Dendritic cell treated with granulocyte-macrophage colony-stimulating factor and Interleukin-4, amounts not matched to agents 40 ng/mL and 50 ng/mL, for 4 days (primary cell): ENCODE measurements at regions of chr6 and their contacts with region 1.

Region 1: GRCh38 chr6:30102970-30103874 is 9.7 kb downstream of the TRIM31 start:
- H3K4me3 Mint-ChIP-seq: peak overlapping the region; percentile 77
- H3K27ac Mint-ChIP-seq: peak overlapping the region; percentile 59
- H3K4me1 Mint-ChIP-seq: peaks cover 48% of the 10 kb centered on the region
- H3K27me3 Mint-ChIP-seq: peaks cover 68% of the 10 kb centered on the region

Region 2: GRCh38 chr6:29995340-29995777 is 107.9 kb before region 1 on chr6:
- intact Hi-C with region 1: no loop called
- H3K4me3 Mint-ChIP-seq: no peak overlapping the region
- H3K27ac Mint-ChIP-seq: no peak overlapping the region
- H3K4me1 Mint-ChIP-seq: no peaks in the 10 kb centered on the region
- H3K27me3 Mint-ChIP-seq: peaks cover 31% of the 10 kb centered on the region

Region 3: DNA sequence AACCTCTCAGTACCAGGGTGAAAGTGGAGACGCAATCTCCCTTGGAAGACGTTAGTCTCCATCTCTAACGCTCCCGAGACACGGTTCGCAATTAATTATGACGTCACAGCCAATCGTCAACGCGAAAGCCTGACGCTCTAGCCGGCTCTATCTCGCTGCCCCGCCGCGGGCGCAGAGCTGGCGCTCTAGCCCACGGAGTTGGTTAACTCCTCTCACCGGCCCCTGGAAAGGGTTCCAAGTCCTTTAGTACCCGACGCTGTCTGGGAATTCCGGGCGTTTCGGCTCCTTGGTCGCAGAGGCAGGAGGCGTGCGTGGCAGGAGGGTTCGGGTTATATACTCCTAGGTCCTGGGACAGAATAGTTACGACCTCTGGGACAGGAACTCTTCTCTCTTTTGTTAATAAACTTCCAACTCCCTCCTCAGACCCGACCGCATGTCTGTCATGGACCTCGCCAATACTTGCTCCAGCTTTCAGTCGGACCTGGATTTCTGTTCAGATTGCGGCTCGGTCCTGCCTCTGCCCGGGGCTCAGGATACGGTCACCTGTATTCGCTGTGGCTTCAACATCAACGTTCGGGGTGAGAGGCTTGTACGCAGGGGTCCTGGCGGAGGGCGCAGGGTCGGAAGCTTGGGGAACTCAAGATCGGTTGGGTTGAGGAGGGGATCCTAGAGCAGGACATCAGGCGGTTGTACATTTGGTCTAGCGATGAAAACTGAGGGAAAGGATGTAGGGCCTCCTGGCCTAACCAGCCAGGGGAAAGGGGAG is 41.9 kb before region 1 on chr6 and contains the start of gene POLR1H:
- intact Hi-C with region 1: loop called (anchors 2 kb)
- H3K4me3 Mint-ChIP-seq: peak within 1 kb of the TSS; percentile 97
- H3K27ac Mint-ChIP-seq: peak within 1 kb of the TSS; percentile 97
- H3K4me1 Mint-ChIP-seq: peaks cover 32% of the 10 kb centered on the region
- H3K27me3 Mint-ChIP-seq: no peaks in the 10 kb centered on the region

Region 4: GRCh38 chr6:30130887-30131862 is 28.0 kb after region 1 on chr6:
- intact Hi-C with region 1: loop called (anchors 1 kb)
- H3K4me3 Mint-ChIP-seq: no peak overlapping the region
- H3K27ac Mint-ChIP-seq: no peak overlapping the region
- H3K4me1 Mint-ChIP-seq: peaks cover 24% of the 10 kb centered on the region
- H3K27me3 Mint-ChIP-seq: peaks cover 83% of the 10 kb centered on the region

Region 5: DNA sequence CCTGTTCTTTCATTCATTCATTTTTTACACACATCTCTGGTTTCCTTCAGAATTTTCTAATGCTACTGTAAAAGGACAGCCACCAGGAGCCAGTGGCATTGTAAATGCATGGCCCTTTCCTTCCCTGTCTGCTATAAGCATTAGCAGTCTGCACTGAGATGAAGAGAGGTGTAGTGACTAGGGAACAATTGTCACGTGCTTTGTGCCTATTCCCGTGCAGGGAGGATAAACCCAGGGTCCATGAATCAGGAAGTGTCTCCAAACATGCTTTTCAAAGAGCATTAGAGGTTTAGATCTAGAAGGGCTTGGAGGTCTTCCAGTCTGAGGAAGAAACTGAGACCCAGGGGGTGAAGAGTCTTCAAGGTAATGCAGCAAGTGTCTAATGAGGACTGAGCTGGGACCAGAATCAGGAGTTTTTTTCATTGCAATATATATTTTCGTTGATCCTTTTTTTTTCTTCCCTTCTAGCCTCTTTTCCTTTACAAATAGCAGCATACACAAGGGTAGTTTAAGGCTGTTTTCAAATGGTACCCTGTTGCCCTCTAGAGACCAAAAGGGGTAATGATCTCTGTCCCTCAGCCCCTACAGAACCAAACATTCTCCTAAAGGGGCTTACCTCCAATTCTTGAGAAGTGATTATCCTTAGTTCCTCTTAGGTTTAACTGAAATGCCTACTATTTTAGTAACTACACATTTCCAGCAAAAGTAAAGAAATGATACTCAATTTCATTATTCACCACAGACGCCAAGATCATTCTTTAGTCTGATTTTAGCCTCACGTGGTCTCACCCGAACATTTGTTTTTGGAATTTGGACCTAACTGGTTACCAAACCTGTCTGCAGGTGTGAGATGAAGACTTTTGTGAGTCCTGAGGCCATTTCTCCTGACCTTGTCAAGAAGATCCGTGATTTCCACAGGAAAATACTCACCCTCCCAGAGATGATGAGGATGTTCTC is 66.7 kb after region 1 on chr6:
- intact Hi-C with region 1: loop called (anchors 1 kb)
- H3K4me3 Mint-ChIP-seq: no peak overlapping the region
- H3K27ac Mint-ChIP-seq: no peak overlapping the region
- H3K4me1 Mint-ChIP-seq: peaks cover 10% of the 10 kb centered on the region
- H3K27me3 Mint-ChIP-seq: peaks cover 57% of the 10 kb centered on the region